GM12878 (cell line): ENCODE measurements at regions of chr5 and their contacts with region 1.

Region 1: DNA sequence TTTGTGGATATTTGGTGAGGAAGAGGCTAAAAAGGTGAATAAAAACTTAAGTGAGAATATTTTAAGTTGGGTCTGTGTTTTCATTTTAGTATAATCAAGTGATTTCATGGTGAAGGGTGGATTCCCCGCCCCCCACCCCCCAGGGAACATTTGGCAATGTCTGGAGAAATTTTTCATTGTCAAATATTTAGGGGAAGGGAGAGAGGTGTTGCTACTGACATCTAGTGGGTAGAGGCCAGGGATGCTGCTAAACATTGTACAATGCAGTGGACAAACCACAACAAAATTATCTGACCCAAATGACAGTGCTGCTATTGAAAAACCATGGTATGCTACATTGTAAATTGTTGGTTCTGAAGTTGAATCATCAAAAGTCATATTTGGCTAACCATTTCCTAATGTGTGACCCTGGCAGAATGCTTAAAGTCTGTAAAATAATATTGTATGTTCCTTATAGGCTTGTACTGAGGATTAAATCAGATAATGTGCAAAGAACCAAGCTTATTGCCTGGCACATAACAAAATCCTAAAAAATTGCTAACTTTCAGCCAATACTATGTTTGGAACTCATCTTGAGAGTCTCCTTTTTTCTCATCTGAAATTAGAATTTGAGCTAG is 5.6 kb downstream of the C5orf24 start:
- DNase-seq: no peak
- ATAC-seq: peak; percentile 71
- H3K4me3 ChIP-seq: no peak overlapping the region
- H3K27ac ChIP-seq: no peak overlapping the region
- H3K4me1 ChIP-seq: peaks cover 3% of the 10 kb centered on the region
- H3K27me3 ChIP-seq: no peaks in the 10 kb centered on the region
- CTCF ChIP-seq: peak; percentile 37 to 64 (median 59); a peak in 5 of 6 replicates
- EP300 ChIP-seq: no peak
- POLR2A ChIP-seq: no peak
- RAD21 ChIP-seq: peak; percentile 43

Region 2: DNA sequence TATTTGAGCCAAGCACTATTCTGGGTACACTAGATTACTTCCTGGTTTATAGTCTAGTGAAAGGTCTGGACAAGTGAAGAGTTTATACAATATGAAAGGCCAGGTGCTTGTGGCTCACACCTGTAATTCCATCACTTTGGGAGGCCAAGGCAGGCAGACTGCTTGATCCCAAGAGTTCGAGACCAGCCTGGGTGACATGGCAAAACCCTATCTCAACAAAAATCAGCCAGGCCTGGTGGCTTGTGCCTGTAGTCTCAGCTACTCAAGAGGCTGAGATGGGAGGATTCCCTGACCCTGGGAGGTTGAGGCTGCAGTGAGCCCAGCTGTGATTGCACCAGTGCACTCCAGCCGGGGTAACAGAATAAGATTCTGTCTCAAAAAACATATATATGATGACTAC is 13.3 kb after region 1 on chr5:
- CTCF ChIA-PET with region 1: interaction called, 24 read pairs
- POLR2A ChIA-PET with region 1: interaction called, 3 read pairs
- RAD21 ChIA-PET with region 1: interaction called, 3 read pairs
- SMC1A ChIA-PET with region 1: interaction called, 5 read pairs
- in situ Hi-C with region 1: no loop called
- intact Hi-C with region 1: no loop called
- DNase-seq: no peak
- ATAC-seq: no peak
- H3K4me3 ChIP-seq: no peak overlapping the region
- H3K27ac ChIP-seq: no peak overlapping the region
- H3K4me1 ChIP-seq: no peaks in the 10 kb centered on the region
- H3K27me3 ChIP-seq: no peaks in the 10 kb centered on the region
- CTCF ChIP-seq: no peak
- EP300 ChIP-seq: no peak
- POLR2A ChIP-seq: no peak
- RAD21 ChIP-seq: no peak

Region 3: DNA sequence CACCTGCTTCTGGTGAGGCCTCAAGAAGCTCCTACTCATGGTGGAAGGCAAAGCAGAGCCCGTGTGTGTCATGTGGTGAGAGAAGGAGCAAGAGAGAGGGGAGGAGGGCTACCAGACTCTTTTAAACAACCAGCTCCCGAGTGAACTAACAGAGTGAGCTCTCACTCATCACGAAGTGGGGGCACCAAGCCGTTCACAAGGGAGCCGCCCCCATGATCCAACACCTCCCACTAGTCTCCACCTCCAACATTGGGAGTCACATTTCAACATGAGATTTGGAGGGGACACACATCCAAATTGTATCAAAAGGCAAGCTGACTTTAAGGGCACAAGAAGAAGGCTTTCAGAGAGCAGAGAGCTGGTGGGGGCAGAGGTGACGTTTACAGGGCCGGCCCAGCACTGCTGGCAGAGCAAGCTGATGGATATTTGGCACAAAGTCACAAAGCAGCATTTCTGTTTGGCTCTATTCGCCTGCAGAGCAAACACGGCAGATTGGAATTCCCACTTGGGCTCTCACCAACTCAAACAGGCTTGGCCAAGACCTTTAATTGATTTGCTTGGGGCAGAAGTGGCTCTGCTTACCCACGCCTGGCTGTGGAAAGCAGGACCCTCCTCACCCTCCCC is 162.6 kb after region 1 on chr5:
- CTCF ChIA-PET with region 1: no interaction called
- POLR2A ChIA-PET with region 1: no interaction called
- RAD21 ChIA-PET with region 1: no interaction called
- SMC1A ChIA-PET with region 1: no interaction called
- in situ Hi-C with region 1: no loop called
- intact Hi-C with region 1: no loop called
- DNase-seq: no peak
- ATAC-seq: no peak
- H3K4me3 ChIP-seq: no peak overlapping the region
- H3K27ac ChIP-seq: no peak overlapping the region
- H3K4me1 ChIP-seq: no peaks in the 10 kb centered on the region
- H3K27me3 ChIP-seq: no peaks in the 10 kb centered on the region
- CTCF ChIP-seq: no peak
- EP300 ChIP-seq: no peak
- POLR2A ChIP-seq: no peak
- RAD21 ChIP-seq: no peak